Activated CD4-positive, alpha-beta T cell treated with anti-CD3 and anti-CD28 coated beads, Interleukin-2, amount 10 ng/mL, durations not matched to agents 24 days and 14 days (primary cell): ENCODE measurements at regions of chr10 and their contacts with region 1.

Region 1: GRCh38 chr10:128494665-128495064 is 368.4 kb upstream of the MKI67 start:
- DNase-seq: no peak
- H3K4me3 Mint-ChIP-seq: no peak overlapping the region
- H3K27ac Mint-ChIP-seq: no peak overlapping the region
- H3K4me1 Mint-ChIP-seq: no peaks in the 10 kb centered on the region
- H3K27me3 Mint-ChIP-seq: no peaks in the 10 kb centered on the region

Region 2: DNA sequence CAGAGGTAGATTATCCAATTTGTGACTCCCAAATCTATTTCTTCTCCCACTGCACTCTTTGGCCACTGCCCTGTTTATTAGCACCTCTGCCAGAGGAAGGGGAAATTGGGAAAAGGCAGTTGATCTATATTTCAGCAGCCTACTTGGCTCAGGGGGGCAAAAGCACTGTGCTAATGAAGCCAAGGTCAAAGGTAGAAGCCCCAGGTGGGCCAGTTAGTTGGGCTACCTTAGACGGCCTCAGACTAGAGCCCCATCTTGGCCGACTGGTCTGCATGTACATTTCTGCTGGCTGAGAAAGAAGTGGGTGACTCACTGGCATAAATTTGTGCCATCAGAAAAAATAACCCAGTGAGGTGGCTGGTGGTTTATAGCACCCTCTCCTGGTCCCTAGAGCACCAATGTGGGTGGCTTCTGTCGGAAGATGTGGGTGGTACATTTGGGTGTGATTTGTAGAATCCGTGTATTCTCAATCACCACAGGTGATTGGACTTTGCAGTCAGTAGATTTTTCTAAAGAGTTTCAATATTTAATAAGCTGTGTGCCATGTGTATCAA is 75.1 kb before region 1 on chr10:
- intact Hi-C with region 1: loop called (anchors 2 kb)
- DNase-seq: no peak
- H3K4me3 Mint-ChIP-seq: no peak overlapping the region
- H3K27ac Mint-ChIP-seq: no peak overlapping the region
- H3K4me1 Mint-ChIP-seq: no peaks in the 10 kb centered on the region
- H3K27me3 Mint-ChIP-seq: no peaks in the 10 kb centered on the region

Region 3: DNA sequence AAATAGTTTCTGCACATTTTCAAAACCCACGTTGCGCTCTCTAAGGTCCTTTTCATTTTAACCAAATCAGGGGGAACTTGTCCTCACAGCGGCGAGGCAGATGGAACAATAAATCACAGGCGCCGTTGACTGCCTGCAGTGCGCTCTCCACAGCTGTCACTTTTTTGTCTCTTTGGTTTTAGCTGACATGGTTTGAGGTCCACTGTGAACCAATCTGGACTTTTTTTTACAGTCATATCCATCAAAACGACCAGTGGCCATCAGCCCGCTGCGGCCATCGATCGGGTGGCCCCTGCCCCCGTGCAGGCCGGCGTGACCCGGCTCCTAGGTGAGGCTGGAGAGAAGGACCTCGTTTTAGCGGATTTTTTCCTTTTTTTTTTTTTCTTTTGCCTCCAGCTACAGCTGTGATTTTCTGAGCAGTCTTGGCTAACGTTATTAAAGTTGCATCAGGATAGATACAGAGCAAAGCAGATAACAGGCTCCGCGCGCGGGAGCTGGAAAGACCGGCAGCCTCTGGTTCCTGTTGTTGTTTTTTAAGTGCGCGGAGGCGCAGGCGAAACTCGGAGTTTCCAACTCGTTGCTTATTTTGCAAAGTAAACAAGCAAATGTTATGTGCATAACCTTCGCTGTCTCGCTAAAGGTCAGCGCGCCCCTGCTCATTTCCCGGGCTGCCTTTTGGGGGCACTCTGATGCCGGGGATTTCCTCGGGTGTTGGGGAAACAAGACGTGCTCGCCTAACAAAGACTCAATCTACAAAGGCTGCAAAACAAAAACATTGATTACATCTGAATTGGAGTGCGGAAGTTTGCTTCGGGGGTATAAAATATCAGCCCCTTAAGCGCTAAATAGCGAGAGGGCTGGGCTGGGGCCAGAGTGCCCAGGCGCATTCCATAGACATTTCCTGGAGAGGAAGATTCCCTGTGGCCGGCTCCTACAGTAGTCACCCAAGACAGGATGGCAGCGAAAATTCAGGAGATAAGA is 46.4 kb after region 1 on chr10:
- intact Hi-C with region 1: no loop called
- DNase-seq: no peak
- H3K4me3 Mint-ChIP-seq: no peak overlapping the region
- H3K27ac Mint-ChIP-seq: no peak overlapping the region
- H3K4me1 Mint-ChIP-seq: no peaks in the 10 kb centered on the region
- H3K27me3 Mint-ChIP-seq: peaks cover 46% of the 10 kb centered on the region

Region 4: GRCh38 chr10:129694691-129695243 is 1200.1 kb after region 1 on chr10:
- intact Hi-C with region 1: no loop called
- DNase-seq: no peak
- H3K4me3 Mint-ChIP-seq: no peak overlapping the region
- H3K27ac Mint-ChIP-seq: no peak overlapping the region
- H3K4me1 Mint-ChIP-seq: no peaks in the 10 kb centered on the region
- H3K27me3 Mint-ChIP-seq: no peaks in the 10 kb centered on the region